Transverse colon (tissue), 4 donors: ENCODE measurements at regions of chr4 and their contacts with region 1.

Region 1: DNA sequence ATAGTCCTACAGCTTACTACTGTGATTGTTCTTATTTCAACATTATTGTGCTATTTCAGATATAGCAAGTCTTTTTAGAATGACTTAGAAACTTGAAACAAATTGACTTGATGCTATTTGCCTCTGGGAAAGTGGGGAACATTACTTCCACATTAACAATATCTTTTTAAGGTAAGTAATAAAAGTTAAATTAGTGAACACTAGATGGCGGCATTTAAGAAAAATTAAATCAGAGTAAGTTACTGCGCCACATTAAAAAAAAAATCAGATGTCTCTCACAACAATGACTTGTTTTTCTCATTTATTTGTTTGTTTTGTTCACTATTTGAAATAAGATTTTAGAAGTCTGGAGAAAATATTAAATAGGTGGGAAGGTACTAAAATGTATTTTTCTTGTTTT is 1026.9 kb upstream of the SLIT2 start:
- DNase-seq: no peak
- H3K4me3 ChIP-seq: no peak overlapping the region
- H3K27ac ChIP-seq: no peak overlapping the region
- H3K4me1 ChIP-seq: no peaks in the 10 kb centered on the region
- H3K27me3 ChIP-seq: no peaks in the 10 kb centered on the region
- CTCF ChIP-seq: peak; percentile 28 to 45 (median 31)
- EP300 ChIP-seq: no peak
- POLR2A ChIP-seq: no peak

Region 2: GRCh38 chr4:19130866-19131265 is 94.0 kb before region 1 on chr4:
- in situ Hi-C with region 1: loop called in 1 of 4 experiments (anchors 25 kb)
- intact Hi-C with region 1: no loop called
- DNase-seq: no peak
- H3K4me3 ChIP-seq: no peak overlapping the region
- H3K27ac ChIP-seq: no peak overlapping the region
- H3K4me1 ChIP-seq: no peaks in the 10 kb centered on the region
- H3K27me3 ChIP-seq: no peaks in the 10 kb centered on the region
- CTCF ChIP-seq: no peak
- EP300 ChIP-seq: no peak
- POLR2A ChIP-seq: no peak

Region 3: GRCh38 chr4:20248155-20248558 is 1023.3 kb after region 1 on chr4:
- in situ Hi-C with region 1: loop called in 2 of 4 experiments (anchors 25 kb)
- intact Hi-C with region 1: no loop called
- DNase-seq: no peak
- H3K4me3 ChIP-seq: no peak overlapping the region
- H3K27ac ChIP-seq: no peak overlapping the region
- H3K4me1 ChIP-seq: peaks cover 0 to 11% (median 9%) of the 10 kb centered on the region in 4 donors
- H3K27me3 ChIP-seq: peaks cover 25% of the 10 kb centered on the region
- CTCF ChIP-seq: peak; percentile 46 to 59 (median 57)
- EP300 ChIP-seq: no peak
- POLR2A ChIP-seq: no peak

Region 4: GRCh38 chr4:20684852-20685763 is 1460.3 kb after region 1 on chr4:
- in situ Hi-C with region 1: no loop called
- intact Hi-C with region 1: loop called (anchors 10 kb)
- DNase-seq: no peak
- H3K4me3 ChIP-seq: no peak overlapping the region
- H3K27ac ChIP-seq: no peak overlapping the region
- H3K4me1 ChIP-seq: peaks cover 0 to 7% (median 2%) of the 10 kb centered on the region in 4 donors
- H3K27me3 ChIP-seq: no peaks in the 10 kb centered on the region
- CTCF ChIP-seq: peak; percentile 59 to 70 (median 68)
- EP300 ChIP-seq: no peak
- POLR2A ChIP-seq: no peak